ENCODE measurements at regions of chr16 and their contacts with region 1.

Region 1: GRCh38 chr16:57648590-57649442 is 19.3 kb upstream of the ADGRG3 start:
- DNase-seq: peak; percentile 34
- H3K4me3 ChIP-seq: no peak overlapping the region
- H3K27ac ChIP-seq: no peak overlapping the region
- H3K27me3 ChIP-seq: no peaks in the 10 kb centered on the region
- CTCF ChIP-seq: peak; percentile 100

Region 2: GRCh38 chr16:57358527-57359095 is 290.2 kb before region 1 on chr16 and contains the start of gene CCL22:
- CTCF ChIA-PET with region 1: no interaction called
- POLR2A ChIA-PET with region 1: no interaction called
- DNase-seq: no peak
- H3K4me3 ChIP-seq: no peak within 1 kb of the TSS
- H3K27ac ChIP-seq: peak within 1 kb of the TSS; percentile 11
- H3K27me3 ChIP-seq: peaks cover 58% of the 10 kb centered on the region
- CTCF ChIP-seq: no peak
- polyA plus RNA-seq, gene CCL22: not detected in 2 replicates

Region 3: DNA sequence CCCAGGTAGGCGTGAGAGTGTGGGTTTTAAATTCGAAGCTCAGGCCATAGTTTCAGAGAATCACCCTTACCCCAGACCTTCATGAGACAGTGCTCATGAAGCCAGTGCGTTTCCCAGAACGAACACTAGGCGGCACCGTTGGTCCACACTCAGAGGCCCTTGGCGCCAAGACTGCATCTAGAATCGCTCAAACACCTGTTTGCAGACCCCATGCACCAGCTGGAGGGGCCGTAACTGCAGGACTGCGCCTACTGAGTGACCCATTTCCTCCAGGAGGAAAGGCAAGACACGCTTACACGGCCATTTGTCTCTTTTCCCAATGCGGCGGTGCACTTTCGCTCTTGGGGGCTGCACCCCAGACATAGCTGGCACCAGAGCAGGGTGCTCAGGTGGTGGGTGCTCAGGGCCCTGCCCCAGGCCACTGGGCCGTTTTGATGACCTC is 72.4 kb before region 1 on chr16:
- CTCF ChIA-PET with region 1: interaction called, 93 read pairs
- POLR2A ChIA-PET with region 1: no interaction called
- DNase-seq: peak; percentile 30
- H3K4me3 ChIP-seq: no peak overlapping the region
- H3K27ac ChIP-seq: no peak overlapping the region
- H3K27me3 ChIP-seq: peaks cover 10% of the 10 kb centered on the region
- CTCF ChIP-seq: peak; percentile 97

Region 4: DNA sequence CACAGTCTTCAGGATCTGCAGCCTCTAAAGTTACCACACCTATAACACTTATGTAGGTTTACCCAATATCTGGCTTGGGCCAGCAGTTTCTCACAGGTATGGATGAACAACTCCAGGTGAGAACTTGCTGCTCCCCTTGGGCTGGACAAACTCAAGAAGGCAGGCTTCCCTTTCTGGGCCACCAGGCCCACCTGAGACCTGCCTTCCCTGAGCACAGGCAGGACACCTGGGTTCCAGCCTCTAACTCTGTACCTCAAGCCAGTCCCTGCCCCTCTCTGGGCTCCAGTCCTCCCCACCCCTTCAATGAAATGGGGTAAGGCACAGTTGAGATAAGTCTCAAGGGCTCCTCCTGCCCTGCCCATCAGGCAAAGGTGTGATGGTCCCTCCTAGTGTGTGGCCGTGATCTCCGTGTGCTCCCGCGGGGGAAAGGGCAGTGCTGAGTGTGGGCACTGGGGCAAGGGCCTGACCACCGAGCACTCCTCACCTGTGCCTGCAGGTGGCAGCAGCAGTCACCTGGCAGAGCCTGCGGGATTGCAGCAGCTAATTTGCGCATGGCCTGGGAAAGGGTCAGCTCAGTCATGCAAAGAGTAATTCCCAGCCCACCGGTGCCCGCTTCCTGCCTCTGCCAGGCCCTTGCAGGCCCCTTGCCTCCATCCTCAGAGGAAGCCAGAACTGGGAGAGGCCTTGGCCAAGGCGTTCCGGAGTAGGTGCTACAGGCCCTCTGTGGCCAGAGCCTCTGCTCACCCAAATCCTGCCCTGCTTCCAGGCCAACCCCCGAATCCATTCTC is 48.6 kb before region 1 on chr16:
- CTCF ChIA-PET with region 1: interaction called, 94 read pairs
- POLR2A ChIA-PET with region 1: no interaction called
- DNase-seq: no peak
- H3K4me3 ChIP-seq: no peak overlapping the region
- H3K27ac ChIP-seq: no peak overlapping the region
- H3K27me3 ChIP-seq: peaks cover 20% of the 10 kb centered on the region
- CTCF ChIP-seq: peak; percentile 64

Region 5: GRCh38 chr16:57628008-57628781 is 20.6 kb before region 1 on chr16 and contains the start of gene ADGRG1:
- CTCF ChIA-PET with region 1: interaction called, 59 read pairs
- POLR2A ChIA-PET with region 1: no interaction called
- DNase-seq: peak; percentile 80
- H3K4me3 ChIP-seq: peak within 1 kb of the TSS; percentile 52
- H3K27ac ChIP-seq: peak within 1 kb of the TSS; percentile 84
- H3K27me3 ChIP-seq: no peaks in the 10 kb centered on the region
- CTCF ChIP-seq: no peak; the same call in 1 of the 2 replicates
- polyA plus RNA-seq, gene ADGRG1: 1.6 and 2.1 TPM in 2 replicates

Region 6: GRCh38 chr16:57802341-57803133 is 153.7 kb after region 1 on chr16 and contains the start of gene KIFC3:
- CTCF ChIA-PET with region 1: no interaction called
- POLR2A ChIA-PET with region 1: no interaction called
- DNase-seq: no peak
- H3K4me3 ChIP-seq: peak within 1 kb of the TSS; percentile 78
- H3K27ac ChIP-seq: peak within 1 kb of the TSS; percentile 77
- H3K27me3 ChIP-seq: no peaks in the 10 kb centered on the region
- CTCF ChIP-seq: no peak
- polyA plus RNA-seq, gene KIFC3: 24.4 and 31.2 TPM in 2 replicates

Region 7: GRCh38 chr16:57863434-57864160 is 214.8 kb after region 1 on chr16:
- CTCF ChIA-PET with region 1: interaction called, 12 read pairs
- POLR2A ChIA-PET with region 1: no interaction called
- DNase-seq: peak; percentile 45
- H3K4me3 ChIP-seq: no peak overlapping the region
- H3K27ac ChIP-seq: no peak overlapping the region
- H3K27me3 ChIP-seq: no peaks in the 10 kb centered on the region
- CTCF ChIP-seq: peak; percentile 75